ENCODE measurements at regions of chr19 and their contacts with region 1.

Region 1: DNA sequence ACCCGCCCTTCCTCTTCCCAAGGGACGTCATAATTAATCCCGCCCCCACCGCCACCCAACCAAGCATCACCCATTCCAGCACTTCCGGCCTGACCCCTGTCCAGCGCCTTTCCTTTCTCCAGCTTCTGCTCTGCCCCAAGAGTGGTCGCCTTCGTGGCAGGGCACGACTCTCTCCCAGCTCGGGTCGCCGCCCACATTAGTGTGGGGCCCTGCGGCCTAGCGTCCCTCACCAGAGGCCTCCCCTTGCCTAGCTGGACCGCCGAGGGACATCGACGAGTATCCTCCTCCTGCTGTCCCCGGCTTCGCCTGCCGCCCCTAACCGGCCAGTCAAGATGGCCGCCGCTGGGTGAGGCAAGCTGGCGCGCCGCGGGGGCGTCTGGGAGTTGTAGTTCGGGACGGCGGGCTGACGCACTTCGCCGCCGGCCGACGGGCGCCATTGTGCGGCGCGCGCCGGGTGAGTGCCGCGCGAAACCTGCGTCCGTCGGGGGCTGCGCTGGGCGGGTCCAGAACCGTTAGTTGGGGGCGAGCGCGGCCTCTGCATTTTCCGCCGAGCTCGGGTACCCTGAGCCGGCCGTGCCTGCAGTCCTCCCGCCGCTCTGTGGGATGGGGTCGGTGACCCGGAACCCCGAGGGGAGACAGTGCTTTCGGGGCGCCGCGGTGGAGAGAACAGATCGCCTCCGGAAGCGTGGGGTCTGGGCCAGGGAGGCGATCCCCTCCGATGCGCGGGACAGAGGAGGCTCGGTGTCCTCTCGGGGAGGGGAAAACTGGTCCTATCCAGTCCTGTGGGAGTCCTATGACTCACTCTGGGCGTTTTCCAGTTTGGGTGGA is at the start of gene ZNF274:
- DNase-seq: peak; percentile 91 to 98
- H3K4me3 ChIP-seq: peak within 1 kb of the TSS; percentile 80
- H3K27ac ChIP-seq: peak within 1 kb of the TSS; percentile 95
- H3K4me1 ChIP-seq: peaks cover 4% of the 10 kb centered on the region; the same call in 1 of the 2 replicates
- H3K27me3 ChIP-seq: no peaks in the 10 kb centered on the region
- CTCF ChIP-seq: no peak
- total RNA-seq, gene ZNF274: 34.3 and 36.4 TPM in 2 replicates

Region 2: DNA sequence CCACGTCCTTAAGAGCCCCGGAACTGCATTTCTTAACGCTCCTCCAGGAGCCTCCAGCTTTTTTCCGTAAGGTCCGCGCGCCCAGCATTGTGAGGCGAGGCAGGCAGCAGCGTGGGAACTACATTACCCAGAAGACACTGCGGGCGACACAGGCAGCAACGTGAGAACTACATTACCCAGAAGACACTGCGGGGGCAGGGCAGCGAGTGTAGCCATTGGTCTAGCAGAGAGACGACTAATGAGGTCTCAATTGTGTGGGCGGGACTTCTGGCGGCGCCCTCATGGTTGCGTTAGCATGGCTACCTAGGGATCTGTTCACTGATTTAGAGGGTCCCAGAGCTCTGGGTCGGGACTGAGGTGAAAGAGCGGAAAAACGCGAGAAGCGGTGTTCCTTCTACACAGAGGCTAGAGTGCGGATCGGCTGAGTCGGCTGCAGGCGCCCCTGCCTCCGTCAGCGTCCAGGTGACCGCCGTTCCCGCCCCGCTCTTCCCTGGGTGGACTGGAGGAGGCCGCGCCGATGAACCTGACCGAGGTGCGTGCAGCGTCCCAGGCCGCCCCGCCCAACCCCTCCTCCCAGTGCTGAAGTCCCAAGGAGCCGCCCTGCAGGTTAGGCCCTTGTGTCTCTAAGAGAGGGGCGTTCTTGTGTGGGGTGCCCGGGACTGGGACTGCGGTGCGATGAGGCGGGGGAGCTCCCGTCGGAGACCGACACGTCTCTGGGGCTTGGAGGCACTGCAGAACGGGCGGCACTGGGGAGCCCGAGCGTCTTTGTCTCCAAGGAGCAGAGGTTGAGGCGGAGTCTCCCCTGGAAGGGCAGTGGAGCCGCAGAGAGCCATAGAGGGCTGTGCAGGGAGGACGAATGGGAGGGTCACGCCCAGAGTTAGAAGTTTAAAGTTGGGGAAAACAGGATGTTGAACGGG is 747.9 kb before region 1 on chr19 and contains the start of gene ZNF749:
- CTCF ChIA-PET with region 1: no interaction called
- POLR2A ChIA-PET with region 1: no interaction called
- intact Hi-C with region 1: loop called (anchors 1 kb)
- DNase-seq: peak; percentile 97
- H3K4me3 ChIP-seq: peak within 1 kb of the TSS; percentile 81
- H3K27ac ChIP-seq: peak within 1 kb of the TSS; percentile 33
- H3K4me1 ChIP-seq: peaks cover 16% of the 10 kb centered on the region
- H3K27me3 ChIP-seq: no peaks in the 10 kb centered on the region
- CTCF ChIP-seq: no peak
- total RNA-seq, gene ZNF749: 17.9 and 19.4 TPM in 2 replicates

Region 3: DNA sequence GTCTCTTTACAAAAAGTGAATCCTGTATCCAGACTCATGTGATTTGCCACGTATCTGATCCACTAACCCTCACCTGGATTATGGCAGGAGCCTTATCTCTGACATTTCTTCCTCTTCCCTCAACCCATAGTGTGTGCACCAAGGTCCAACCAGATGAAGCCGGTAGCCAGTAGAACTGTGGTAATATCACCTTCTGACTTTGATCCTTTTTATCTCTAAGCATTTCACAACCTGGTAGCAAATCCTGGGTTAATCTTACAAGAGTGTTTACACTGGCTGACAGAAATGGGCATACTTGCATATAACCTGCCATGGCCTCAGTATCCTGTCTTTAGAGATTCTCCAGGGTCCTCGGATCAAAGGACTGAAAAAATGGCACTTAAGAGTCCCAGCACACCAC is 268.7 kb before region 1 on chr19:
- CTCF ChIA-PET with region 1: no interaction called
- POLR2A ChIA-PET with region 1: interaction called, 10 read pairs
- intact Hi-C with region 1: no loop called
- DNase-seq: no peak
- H3K4me3 ChIP-seq: peak overlapping the region; percentile 63; the same call in 1 of the 2 replicates
- H3K27ac ChIP-seq: no peak overlapping the region
- H3K4me1 ChIP-seq: 0 out of 2 replicates have a peak, but pooled peaks cover 7% of the 10 kb centered on the region
- H3K27me3 ChIP-seq: no peaks in the 10 kb centered on the region
- CTCF ChIP-seq: no peak

Region 4: GRCh38 chr19:58002384-58003173 is 180.6 kb before region 1 on chr19 and contains the start of gene ZNF606:
- CTCF ChIA-PET with region 1: no interaction called
- POLR2A ChIA-PET with region 1: interaction called, 8 read pairs
- intact Hi-C with region 1: loop called (anchors 1 kb)
- DNase-seq: peak; percentile 69 to 84
- H3K4me3 ChIP-seq: peak within 1 kb of the TSS; percentile 96
- H3K27ac ChIP-seq: peak within 1 kb of the TSS; percentile 31
- H3K4me1 ChIP-seq: 0 out of 2 replicates have a peak, but pooled peaks cover 10% of the 10 kb centered on the region
- H3K27me3 ChIP-seq: no peaks in the 10 kb centered on the region
- CTCF ChIP-seq: no peak
- total RNA-seq, gene ZNF606: 16.3 and 21.6 TPM in 2 replicates

Region 5: GRCh38 chr19:58107778-58108545 is 75.2 kb before region 1 on chr19:
- CTCF ChIA-PET with region 1: no interaction called
- POLR2A ChIA-PET with region 1: no interaction called
- intact Hi-C with region 1: no loop called
- DNase-seq: no peak
- H3K4me3 ChIP-seq: no peak overlapping the region
- H3K27ac ChIP-seq: no peak overlapping the region
- H3K4me1 ChIP-seq: no peaks in the 10 kb centered on the region
- H3K27me3 ChIP-seq: no peaks in the 10 kb centered on the region
- CTCF ChIP-seq: no peak

Region 6: GRCh38 chr19:58128041-58128685 is 55.0 kb before region 1 on chr19:
- CTCF ChIA-PET with region 1: no interaction called
- POLR2A ChIA-PET with region 1: no interaction called
- intact Hi-C with region 1: no loop called
- DNase-seq: no peak
- H3K4me3 ChIP-seq: no peak overlapping the region; the same call in 1 of the 2 replicates
- H3K27ac ChIP-seq: no peak overlapping the region
- H3K4me1 ChIP-seq: no peaks in the 10 kb centered on the region
- H3K27me3 ChIP-seq: no peaks in the 10 kb centered on the region
- CTCF ChIP-seq: no peak

Region 7: GRCh38 chr19:58154679-58155648 is 28.2 kb before region 1 on chr19:
- CTCF ChIA-PET with region 1: interaction called, 3 read pairs
- POLR2A ChIA-PET with region 1: interaction called, 5 read pairs
- intact Hi-C with region 1: loop called (anchors 1 kb)
- DNase-seq: peak; percentile 81 to 99
- H3K4me3 ChIP-seq: peak overlapping the region; percentile 91
- H3K27ac ChIP-seq: peak overlapping the region; percentile 12; the same call in 1 of the 2 replicates
- H3K4me1 ChIP-seq: no peaks in the 10 kb centered on the region
- H3K27me3 ChIP-seq: no peaks in the 10 kb centered on the region
- CTCF ChIP-seq: peak; percentile 99

Region 8: DNA sequence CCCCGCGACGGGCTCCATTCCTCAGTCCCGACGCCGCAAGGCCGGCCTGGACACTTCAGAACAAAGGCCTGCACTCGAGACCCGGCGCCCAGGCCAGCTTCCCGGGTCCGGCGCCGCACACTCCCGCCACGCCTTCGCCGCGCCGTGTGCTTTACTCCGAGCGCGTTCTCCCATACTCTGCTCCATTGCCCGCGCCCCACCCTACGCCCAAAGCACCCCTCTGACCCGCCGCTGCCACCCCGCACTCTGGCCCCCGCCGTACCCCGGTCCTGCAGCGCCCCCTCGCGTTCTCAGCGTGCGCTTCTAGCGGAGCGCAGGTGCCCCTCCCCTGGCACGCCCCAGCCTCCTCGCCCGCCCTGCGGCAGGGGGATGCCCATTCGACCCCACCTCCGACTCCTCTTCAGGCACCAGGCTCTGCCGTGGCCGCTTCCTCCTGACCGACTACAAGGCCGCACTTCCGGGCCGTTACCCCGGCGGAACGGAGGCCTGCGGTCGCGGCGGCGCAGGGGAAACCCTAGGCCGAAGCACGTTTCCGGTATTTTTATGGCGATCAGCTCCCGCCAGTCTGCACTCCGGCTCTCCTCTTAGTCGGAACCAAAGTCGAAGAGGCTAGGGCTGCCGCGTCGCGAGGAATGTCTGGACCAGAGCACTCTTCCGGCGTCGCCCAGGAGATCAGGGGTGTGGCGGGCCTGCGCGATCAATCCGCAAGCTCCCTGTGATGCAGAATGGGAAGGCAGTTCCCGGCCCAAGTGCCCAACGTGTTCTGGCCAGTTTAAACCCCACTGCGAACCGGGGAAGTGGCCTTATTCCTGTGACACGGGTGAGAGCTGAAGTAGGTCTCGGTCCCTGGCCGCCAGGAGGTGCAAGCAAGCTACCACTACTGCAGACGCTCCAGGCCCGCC is 336.4 kb after region 1 on chr19 and contains the start of gene ZBTB45:
- CTCF ChIA-PET with region 1: no interaction called
- POLR2A ChIA-PET with region 1: no interaction called
- intact Hi-C with region 1: loop called (anchors 1 kb)
- DNase-seq: peak; percentile 83 to 92
- H3K4me3 ChIP-seq: peak within 1 kb of the TSS; percentile 83
- H3K27ac ChIP-seq: peak within 1 kb of the TSS; percentile 68
- H3K4me1 ChIP-seq: peaks cover 10% of the 10 kb centered on the region
- H3K27me3 ChIP-seq: no peaks in the 10 kb centered on the region
- CTCF ChIP-seq: peak; percentile 67
- total RNA-seq, gene ZBTB45: 8.1 and 8.9 TPM in 2 replicates